Activated B cell treated with CpG ODN at 0.5 μM for 24 hours (primary cell): ENCODE measurements at regions of chr17 and their contacts with region 1.

Region 1: GRCh38 chr17:77429919-77430752 is 289.4 kb downstream of the SEC14L1 start:
- DNase-seq: peak; percentile 67
- ATAC-seq: peak; percentile 37
- H3K4me3 Mint-ChIP-seq: no peak overlapping the region
- H3K27ac Mint-ChIP-seq: peak overlapping the region; percentile 63
- H3K4me1 Mint-ChIP-seq: peaks cover 96% of the 10 kb centered on the region
- H3K27me3 Mint-ChIP-seq: no peaks in the 10 kb centered on the region
- CTCF ChIP-seq: no peak

Region 2: DNA sequence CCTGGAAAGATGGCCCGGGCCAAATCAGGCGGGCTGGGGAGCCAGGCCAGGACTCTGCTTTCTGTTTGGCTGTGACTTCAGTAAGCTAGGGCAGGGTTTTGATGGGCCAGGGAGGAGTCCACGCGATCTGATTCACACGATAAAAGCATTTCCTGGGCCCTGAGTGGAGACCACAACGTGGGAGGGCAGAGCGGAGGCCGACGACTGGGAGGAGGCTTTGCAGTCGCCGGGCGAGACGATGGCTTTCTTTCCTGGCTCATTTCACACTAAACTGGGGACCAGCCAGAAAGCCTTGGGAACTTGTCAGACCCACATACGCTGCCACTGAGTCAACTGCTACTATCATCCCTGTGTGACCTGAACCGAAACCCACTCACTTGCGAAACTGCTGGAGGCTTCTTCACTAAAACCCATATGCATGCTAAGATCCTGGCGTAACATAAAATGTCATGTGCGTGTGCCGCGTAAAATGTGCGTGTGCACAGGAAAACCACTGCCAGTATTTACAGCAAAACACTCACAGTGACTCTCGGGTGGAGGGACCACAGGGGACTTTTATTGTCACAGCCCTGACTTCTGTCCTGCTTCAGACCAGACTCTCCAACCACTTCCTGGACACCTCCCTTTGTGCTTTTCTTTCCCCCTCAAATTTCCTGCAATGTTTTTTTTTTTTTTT is 914.7 kb before region 1 on chr17:
- CTCF ChIA-PET with region 1: no interaction called
- POLR2A ChIA-PET with region 1: interaction called, 14 read pairs
- intact Hi-C with region 1: no loop called
- DNase-seq: peak; percentile 54
- ATAC-seq: peak; percentile 84
- H3K4me3 Mint-ChIP-seq: peak overlapping the region; percentile 71
- H3K27ac Mint-ChIP-seq: peak overlapping the region; percentile 93
- H3K4me1 Mint-ChIP-seq: peaks cover 23% of the 10 kb centered on the region
- H3K27me3 Mint-ChIP-seq: peaks cover under 1% of the 10 kb centered on the region
- CTCF ChIP-seq: no peak

Region 3: GRCh38 chr17:77254951-77255825 is 174.9 kb before region 1 on chr17:
- CTCF ChIA-PET with region 1: no interaction called
- POLR2A ChIA-PET with region 1: no interaction called
- intact Hi-C with region 1: no loop called
- DNase-seq: no peak
- ATAC-seq: no peak
- H3K4me3 Mint-ChIP-seq: no peak overlapping the region
- H3K27ac Mint-ChIP-seq: no peak overlapping the region
- H3K4me1 Mint-ChIP-seq: no peaks in the 10 kb centered on the region
- H3K27me3 Mint-ChIP-seq: peaks cover 13% of the 10 kb centered on the region
- CTCF ChIP-seq: no peak

Region 4: GRCh38 chr17:77273397-77274085 is 156.6 kb before region 1 on chr17:
- CTCF ChIA-PET with region 1: no interaction called
- POLR2A ChIA-PET with region 1: no interaction called
- intact Hi-C with region 1: no loop called
- DNase-seq: no peak
- ATAC-seq: peak; percentile 74
- H3K4me3 Mint-ChIP-seq: no peak overlapping the region
- H3K27ac Mint-ChIP-seq: no peak overlapping the region
- H3K4me1 Mint-ChIP-seq: peaks cover 1% of the 10 kb centered on the region
- H3K27me3 Mint-ChIP-seq: peaks cover 8% of the 10 kb centered on the region
- CTCF ChIP-seq: no peak

Region 5: DNA sequence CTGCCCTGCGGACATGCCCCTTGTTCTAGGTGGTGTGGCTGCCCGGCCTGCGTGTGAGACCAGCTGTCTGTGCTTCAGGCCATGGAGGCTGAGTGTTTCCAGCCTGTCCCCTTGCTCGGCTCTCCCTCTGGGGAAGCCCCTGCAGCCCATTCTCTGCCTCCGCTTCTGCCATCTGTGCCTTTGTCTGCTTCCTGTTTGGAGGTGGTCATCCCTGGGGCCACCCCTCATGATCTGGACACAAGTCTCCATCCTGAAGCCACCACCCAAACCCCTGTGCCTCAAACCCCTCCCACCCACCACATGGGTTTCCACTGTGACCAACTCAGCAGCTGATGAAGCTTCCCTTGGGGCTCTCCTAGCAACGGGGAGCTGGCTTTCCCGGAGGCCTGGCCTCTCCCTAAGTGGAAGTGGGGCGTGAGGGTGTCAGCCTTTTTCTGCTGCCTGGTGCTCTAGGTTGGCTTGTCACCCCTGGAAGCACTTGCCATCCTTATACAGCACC is 104.5 kb before region 1 on chr17:
- CTCF ChIA-PET with region 1: interaction called, 47 read pairs
- POLR2A ChIA-PET with region 1: interaction called, 14 read pairs
- intact Hi-C with region 1: no loop called
- DNase-seq: no peak
- ATAC-seq: peak; percentile 6
- H3K4me3 Mint-ChIP-seq: peak overlapping the region; percentile 92
- H3K27ac Mint-ChIP-seq: peak overlapping the region; percentile 96
- H3K4me1 Mint-ChIP-seq: peaks cover 88% of the 10 kb centered on the region
- H3K27me3 Mint-ChIP-seq: no peaks in the 10 kb centered on the region
- CTCF ChIP-seq: no peak

Region 6: DNA sequence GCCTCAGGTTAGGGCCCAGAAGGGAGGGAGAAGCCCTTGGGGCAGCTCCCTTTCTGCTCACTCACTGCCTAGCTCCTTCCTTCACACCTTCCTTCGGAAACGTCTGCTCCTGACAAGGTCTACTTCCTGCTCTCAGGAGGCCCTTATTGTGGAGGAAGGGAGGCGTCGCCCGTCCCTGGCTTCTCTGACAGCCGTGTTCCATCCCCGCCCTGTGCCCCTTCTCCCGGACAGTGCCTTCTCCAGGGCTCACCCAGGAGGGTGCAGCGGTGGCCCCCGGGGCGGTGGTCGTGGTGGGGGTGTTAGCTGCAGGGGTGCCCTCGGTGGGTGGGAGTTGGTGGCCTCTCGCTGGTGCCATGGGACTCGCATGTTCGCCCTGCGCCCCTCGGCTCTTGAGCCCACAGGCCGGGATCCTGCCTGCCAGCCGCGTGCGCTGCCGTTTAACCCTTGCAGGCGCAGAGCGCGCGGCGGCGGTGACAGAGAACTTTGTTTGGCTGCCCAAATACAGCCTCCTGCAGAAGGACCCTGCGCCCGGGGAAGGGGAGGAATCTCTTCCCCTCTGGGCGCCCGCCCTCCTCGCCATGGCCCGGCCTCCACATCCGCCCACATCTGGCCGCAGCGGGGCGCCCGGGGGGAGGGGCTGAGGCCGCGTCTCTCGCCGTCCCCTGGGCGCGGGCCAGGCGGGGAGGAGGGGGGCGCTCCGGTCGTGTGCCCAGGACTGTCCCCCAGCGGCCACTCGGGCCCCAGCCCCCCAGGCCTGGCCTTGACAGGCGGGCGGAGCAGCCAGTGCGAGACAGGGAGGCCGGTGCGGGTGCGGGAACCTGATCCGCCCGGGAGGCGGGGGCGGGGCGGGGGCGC is 57.5 kb before region 1 on chr17:
- CTCF ChIA-PET with region 1: interaction called, 11 read pairs
- POLR2A ChIA-PET with region 1: no interaction called
- intact Hi-C with region 1: no loop called
- DNase-seq: peak; percentile 67
- ATAC-seq: peak; percentile 70
- H3K4me3 Mint-ChIP-seq: peak overlapping the region; percentile 70
- H3K27ac Mint-ChIP-seq: no peak overlapping the region
- H3K4me1 Mint-ChIP-seq: peaks cover 46% of the 10 kb centered on the region
- H3K27me3 Mint-ChIP-seq: no peaks in the 10 kb centered on the region
- CTCF ChIP-seq: no peak

Region 7: DNA sequence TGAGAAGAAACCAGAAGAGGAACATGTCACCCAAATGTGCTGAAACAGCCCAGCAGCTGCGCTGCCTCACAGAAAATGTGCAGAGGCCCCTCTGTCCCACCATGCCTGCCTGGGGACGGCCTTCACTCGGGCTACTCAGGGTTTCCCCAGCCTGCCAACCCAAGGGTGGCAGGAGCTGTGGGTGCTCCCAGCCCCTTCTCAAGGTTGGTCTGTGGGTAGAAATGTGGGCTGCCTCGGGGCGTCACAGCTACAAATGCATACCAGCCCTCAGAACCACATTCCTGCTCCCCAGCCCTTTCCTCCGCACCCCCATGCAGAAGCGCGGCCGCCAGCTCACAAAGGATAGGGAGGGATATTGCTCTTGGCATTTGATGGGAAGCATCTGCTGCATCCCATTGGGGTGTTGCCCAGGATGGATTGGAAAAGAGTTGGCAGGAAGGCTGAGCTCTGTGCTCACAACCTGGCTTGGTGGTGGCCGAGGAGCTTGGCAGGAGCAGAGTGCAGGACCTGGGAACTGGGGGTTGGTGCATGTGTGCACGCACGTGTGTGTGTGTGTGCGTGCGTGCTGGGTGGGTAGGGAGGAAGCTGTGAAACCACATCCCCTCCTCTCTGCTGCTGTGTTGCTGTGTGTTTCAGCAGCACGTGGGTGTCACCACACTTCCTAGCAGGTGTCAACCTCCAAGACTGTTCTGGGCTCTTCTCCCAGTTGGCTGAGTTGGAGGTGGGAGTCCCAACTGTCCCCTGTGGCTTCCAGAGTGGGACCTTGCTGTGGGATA is 15.0 kb after region 1 on chr17:
- CTCF ChIA-PET with region 1: interaction called, 58 read pairs
- POLR2A ChIA-PET with region 1: interaction called, 325 read pairs
- intact Hi-C with region 1: loop called (anchors 1 kb)
- DNase-seq: peak; percentile 70
- ATAC-seq: peak; percentile 45
- H3K4me3 Mint-ChIP-seq: peak overlapping the region; percentile 80
- H3K27ac Mint-ChIP-seq: peak overlapping the region; percentile 94
- H3K4me1 Mint-ChIP-seq: peaks cover 96% of the 10 kb centered on the region
- H3K27me3 Mint-ChIP-seq: no peaks in the 10 kb centered on the region
- CTCF ChIP-seq: no peak

Region 8: DNA sequence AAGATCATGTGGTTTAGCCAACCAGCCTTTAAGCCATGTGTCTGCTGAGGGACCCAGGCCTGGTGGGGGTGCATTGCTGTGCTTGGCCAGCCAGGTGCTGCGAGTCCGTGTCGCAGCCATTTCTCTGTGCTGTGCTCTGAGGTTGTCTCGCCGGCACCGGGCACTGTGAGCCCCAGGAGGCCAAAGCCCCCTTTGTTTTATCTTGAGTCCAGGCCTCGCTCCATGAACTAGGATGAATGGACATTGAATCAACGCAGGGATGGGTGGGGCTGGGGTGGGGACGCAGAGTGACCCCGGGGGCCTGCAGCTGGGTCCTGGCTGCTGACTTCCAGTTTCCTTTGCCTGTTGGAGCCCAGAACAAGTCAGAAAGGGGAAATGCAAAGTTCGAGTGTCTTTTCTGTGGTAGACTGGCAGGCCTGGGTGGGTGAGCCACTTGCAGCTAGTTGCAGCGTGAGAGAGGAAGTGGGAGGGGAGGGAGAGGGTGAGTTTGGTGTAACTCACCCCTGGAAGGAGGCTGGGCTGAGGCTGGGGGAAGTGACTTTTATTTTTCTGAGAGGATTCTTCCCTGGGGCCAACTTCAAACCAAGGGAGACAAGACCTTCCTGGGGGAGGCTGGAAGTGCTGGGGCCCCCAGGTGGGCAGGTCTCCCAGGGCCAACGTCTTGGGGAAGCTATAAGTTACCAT is 35.4 kb after region 1 on chr17:
- CTCF ChIA-PET with region 1: interaction called, 12 read pairs
- POLR2A ChIA-PET with region 1: interaction called, 831 read pairs
- intact Hi-C with region 1: loop called (anchors 5 kb)
- DNase-seq: peak; percentile 62
- ATAC-seq: peak; percentile 81
- H3K4me3 Mint-ChIP-seq: peak overlapping the region; percentile 75
- H3K27ac Mint-ChIP-seq: peak overlapping the region; percentile 93
- H3K4me1 Mint-ChIP-seq: peaks cover 94% of the 10 kb centered on the region
- H3K27me3 Mint-ChIP-seq: no peaks in the 10 kb centered on the region
- CTCF ChIP-seq: no peak

Region 9: GRCh38 chr17:77494664-77495435 is 64.7 kb after region 1 on chr17:
- CTCF ChIA-PET with region 1: interaction called, 142 read pairs
- POLR2A ChIA-PET with region 1: interaction called, 24 read pairs
- intact Hi-C with region 1: loop called (anchors 1 kb)
- DNase-seq: peak; percentile 73
- ATAC-seq: peak; percentile 64
- H3K4me3 Mint-ChIP-seq: peak overlapping the region; percentile 15
- H3K27ac Mint-ChIP-seq: peak overlapping the region; percentile 77
- H3K4me1 Mint-ChIP-seq: peaks cover 27% of the 10 kb centered on the region
- H3K27me3 Mint-ChIP-seq: no peaks in the 10 kb centered on the region
- CTCF ChIP-seq: peak; percentile 77

Region 10: DNA sequence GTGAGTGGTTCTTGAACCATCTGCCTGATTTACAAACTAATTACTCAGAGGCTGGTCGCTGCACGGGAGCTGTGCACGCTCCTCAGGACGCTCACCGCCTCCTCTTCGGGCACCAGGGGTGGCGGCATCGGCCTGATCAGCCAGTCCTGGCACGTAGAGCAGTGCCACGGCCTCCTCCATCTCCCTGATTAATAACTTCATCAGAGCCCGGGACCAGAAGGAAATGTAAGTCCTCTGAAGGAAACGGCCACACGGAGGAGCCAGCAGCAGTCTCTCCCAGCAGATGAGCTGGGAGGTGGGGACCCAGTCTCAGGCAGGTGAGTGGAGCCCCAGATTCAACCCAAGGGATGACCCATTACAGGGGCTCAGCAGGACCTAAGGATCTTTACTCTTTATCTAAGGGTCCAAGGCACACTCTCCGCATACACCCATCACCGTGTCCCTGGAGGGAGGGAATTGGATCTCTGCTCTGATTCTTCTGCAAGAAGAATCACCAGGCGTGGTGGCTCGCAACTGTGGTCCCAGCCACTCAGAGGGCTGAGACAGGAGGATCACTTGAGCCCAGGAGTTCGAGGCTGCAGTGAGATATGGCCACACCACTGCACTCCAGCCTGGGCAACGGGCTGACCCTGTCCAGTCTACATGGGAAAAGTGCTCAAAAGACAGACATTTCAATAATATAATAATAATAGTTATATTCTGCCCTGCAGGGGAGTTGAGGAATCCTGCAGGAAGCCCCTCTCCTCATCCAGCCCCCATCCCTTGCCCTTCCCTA is 77.2 kb after region 1 on chr17:
- CTCF ChIA-PET with region 1: no interaction called
- POLR2A ChIA-PET with region 1: no interaction called
- intact Hi-C with region 1: no loop called
- DNase-seq: no peak
- ATAC-seq: no peak
- H3K4me3 Mint-ChIP-seq: no peak overlapping the region
- H3K27ac Mint-ChIP-seq: no peak overlapping the region
- H3K4me1 Mint-ChIP-seq: no peaks in the 10 kb centered on the region
- H3K27me3 Mint-ChIP-seq: no peaks in the 10 kb centered on the region
- CTCF ChIP-seq: no peak

Region 11: GRCh38 chr17:77734341-77735080 is 304.4 kb after region 1 on chr17:
- CTCF ChIA-PET with region 1: no interaction called
- POLR2A ChIA-PET with region 1: no interaction called
- intact Hi-C with region 1: no loop called
- DNase-seq: peak; percentile 8
- ATAC-seq: no peak
- H3K4me3 Mint-ChIP-seq: no peak overlapping the region
- H3K27ac Mint-ChIP-seq: no peak overlapping the region
- H3K4me1 Mint-ChIP-seq: no peaks in the 10 kb centered on the region
- H3K27me3 Mint-ChIP-seq: peaks cover 27% of the 10 kb centered on the region
- CTCF ChIP-seq: no peak